ENCODE measurements at regions of chr19 and their contacts with region 1.

Region 1: DNA sequence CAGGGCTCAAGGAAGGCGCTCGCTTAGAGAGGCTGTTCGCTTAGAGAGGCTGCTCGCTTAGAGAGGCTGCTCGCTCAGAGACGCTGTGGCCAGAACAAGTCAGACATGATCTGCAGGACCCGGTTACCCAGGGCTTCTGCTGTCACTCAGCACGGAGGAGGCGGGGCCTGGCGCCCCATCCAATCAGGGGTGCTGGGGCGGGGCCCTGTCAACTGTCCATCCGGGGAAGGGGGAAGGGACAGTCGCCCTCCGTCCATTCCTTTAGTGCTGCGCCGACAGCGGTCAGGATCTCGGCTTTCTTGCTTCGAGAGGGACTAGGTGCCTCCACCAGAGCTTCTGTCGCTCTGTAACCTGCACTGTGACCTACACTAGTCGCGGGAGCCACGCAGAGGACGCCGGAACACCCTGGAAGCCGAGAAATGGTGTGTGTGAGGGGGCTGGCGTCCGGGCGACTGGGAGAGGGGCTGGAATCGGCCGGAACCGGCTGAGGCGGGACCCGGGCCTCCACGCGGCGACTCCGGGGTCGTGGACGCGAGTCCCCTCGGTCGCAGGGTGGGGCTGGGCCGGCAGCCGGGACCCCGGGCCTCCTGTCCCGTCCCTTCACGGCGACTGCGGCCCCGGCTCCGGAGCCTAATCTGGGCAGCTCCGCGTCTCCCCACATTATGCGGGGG is at the start of gene ZNF440:
- DNase-seq: peak; percentile 91
- H3K4me3 Mint-ChIP-seq: peak within 1 kb of the TSS; percentile 81
- H3K27ac Mint-ChIP-seq: peak within 1 kb of the TSS; percentile 82
- H3K4me1 Mint-ChIP-seq: peaks cover 30% of the 10 kb centered on the region
- H3K27me3 Mint-ChIP-seq: no peaks in the 10 kb centered on the region
- total RNA-seq, gene ZNF440: 13.6 to 16.3 TPM

Region 2: DNA sequence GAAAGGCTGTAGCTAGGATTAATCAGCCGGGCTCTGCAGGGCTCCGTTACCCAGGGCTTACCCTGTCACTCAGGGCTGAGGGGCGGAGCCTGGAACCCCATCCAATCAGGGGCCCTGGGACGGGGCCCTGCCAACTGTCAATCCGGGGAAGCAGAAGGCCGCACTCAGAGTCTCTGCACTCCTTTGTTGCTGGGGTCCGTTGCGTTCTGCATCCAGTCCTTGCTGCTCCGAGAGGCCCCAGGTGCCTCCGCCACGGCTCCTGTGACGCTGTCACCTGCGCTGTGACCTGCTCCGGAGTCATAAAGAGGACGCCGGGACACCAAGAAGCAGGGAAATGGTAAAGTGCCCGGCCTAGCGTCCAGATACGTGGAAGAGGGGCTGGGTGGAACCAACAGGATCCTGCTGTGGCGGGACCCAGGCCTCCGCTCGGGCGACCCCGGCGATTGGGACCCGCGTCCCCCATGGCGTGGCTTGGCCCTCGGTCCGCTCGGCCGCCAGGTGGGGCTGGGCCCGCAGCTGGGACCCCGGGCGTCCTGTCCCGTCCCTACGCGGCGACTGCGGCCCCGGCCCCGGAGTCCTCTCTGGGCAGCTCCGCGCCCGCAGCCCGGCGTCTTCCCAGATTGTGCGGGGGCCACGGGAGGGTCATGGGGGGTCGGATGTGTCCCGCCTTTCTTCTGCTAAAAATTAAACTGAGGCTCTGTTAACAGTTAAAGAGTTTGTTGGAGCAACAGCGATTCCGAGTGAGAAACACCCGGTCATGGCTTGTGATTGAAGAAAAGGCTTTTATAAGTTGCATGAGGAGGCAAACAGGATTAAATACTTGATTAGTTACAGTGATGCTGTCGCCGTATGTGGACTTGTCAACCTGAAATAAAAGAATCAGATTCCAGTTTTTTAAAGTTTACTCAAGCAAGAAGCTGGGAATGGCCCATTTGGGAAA is 15.5 kb before region 1 on chr19 and contains the start of gene ZNF491:
- CTCF ChIA-PET with region 1: interaction called, 15 read pairs
- POLR2A ChIA-PET with region 1: no interaction called
- DNase-seq: peak; percentile 84
- H3K4me3 Mint-ChIP-seq: peak within 1 kb of the TSS; percentile 77
- H3K27ac Mint-ChIP-seq: peak within 1 kb of the TSS; percentile 84
- H3K4me1 Mint-ChIP-seq: peaks cover 20% of the 10 kb centered on the region
- H3K27me3 Mint-ChIP-seq: no peaks in the 10 kb centered on the region
- total RNA-seq, gene ZNF491: 1.1 to 1.4 TPM